CD8-positive, alpha-beta memory T cell (primary cell): ENCODE measurements at regions of chr1 and their contacts with region 1.

Region 1: GRCh38 chr1:211698161-211699026 is 23.0 kb upstream of the NEK2 start:
- DNase-seq: peak; percentile 72 to 84 (median 76)
- H3K4me3 ChIP-seq: peak overlapping the region; percentile 51
- H3K4me3 Mint-ChIP-seq: peak overlapping the region in 6 of 7 donors; percentile 65 to 84 (median 76)
- H3K27ac ChIP-seq: no peak overlapping the region
- H3K27ac Mint-ChIP-seq: peak overlapping the region in 3 of 8 donors; percentile 61 to 90 (median 78)
- H3K4me1 ChIP-seq: peaks cover 16% of the 10 kb centered on the region
- H3K4me1 Mint-ChIP-seq: peaks cover 35 to 53% (median 42%) of the 10 kb centered on the region in 3 donors
- H3K27me3 ChIP-seq: no peaks in the 10 kb centered on the region
- H3K27me3 Mint-ChIP-seq: no peaks in the 10 kb centered on the region

Region 2: GRCh38 chr1:211675230-211676105 is 22.9 kb before region 1 on chr1 and contains the start of gene NEK2:
- CTCF ChIA-PET with region 1: interaction called, 73 read pairs
- POLR2A ChIA-PET with region 1: no interaction called
- DNase-seq: peak; percentile 70 to 89 (median 80)
- H3K4me3 ChIP-seq: peak within 1 kb of the TSS; percentile 74
- H3K4me3 Mint-ChIP-seq: peak within 1 kb of the TSS; percentile 86 to 98 (median 92)
- H3K27ac ChIP-seq: peak within 1 kb of the TSS; percentile 65
- H3K27ac Mint-ChIP-seq: peak within 1 kb of the TSS; percentile 61 to 88 (median 81)
- H3K4me1 ChIP-seq: peaks cover 4% of the 10 kb centered on the region
- H3K4me1 Mint-ChIP-seq: peaks cover 16 to 23% (median 19%) of the 10 kb centered on the region in 3 donors
- H3K27me3 ChIP-seq: no peaks in the 10 kb centered on the region
- H3K27me3 Mint-ChIP-seq: no peaks in the 10 kb centered on the region
- total RNA-seq, gene NEK2: 14.1 to 14.8 TPM

Region 3: GRCh38 chr1:211680752-211681327 is 17.6 kb before region 1 on chr1:
- CTCF ChIA-PET with region 1: interaction called, 73 read pairs
- POLR2A ChIA-PET with region 1: no interaction called
- DNase-seq: peak; percentile 64 to 86 (median 77)
- H3K4me3 ChIP-seq: no peak overlapping the region
- H3K4me3 Mint-ChIP-seq: peak overlapping the region in 6 of 7 donors; percentile 15 to 50 (median 37)
- H3K27ac ChIP-seq: no peak overlapping the region
- H3K27ac Mint-ChIP-seq: peak overlapping the region; percentile 90 to 98 (median 94)
- H3K4me1 ChIP-seq: peaks cover 14% of the 10 kb centered on the region
- H3K4me1 Mint-ChIP-seq: peaks cover 24 to 30% (median 25%) of the 10 kb centered on the region in 3 donors
- H3K27me3 ChIP-seq: no peaks in the 10 kb centered on the region
- H3K27me3 Mint-ChIP-seq: no peaks in the 10 kb centered on the region

Region 4: DNA sequence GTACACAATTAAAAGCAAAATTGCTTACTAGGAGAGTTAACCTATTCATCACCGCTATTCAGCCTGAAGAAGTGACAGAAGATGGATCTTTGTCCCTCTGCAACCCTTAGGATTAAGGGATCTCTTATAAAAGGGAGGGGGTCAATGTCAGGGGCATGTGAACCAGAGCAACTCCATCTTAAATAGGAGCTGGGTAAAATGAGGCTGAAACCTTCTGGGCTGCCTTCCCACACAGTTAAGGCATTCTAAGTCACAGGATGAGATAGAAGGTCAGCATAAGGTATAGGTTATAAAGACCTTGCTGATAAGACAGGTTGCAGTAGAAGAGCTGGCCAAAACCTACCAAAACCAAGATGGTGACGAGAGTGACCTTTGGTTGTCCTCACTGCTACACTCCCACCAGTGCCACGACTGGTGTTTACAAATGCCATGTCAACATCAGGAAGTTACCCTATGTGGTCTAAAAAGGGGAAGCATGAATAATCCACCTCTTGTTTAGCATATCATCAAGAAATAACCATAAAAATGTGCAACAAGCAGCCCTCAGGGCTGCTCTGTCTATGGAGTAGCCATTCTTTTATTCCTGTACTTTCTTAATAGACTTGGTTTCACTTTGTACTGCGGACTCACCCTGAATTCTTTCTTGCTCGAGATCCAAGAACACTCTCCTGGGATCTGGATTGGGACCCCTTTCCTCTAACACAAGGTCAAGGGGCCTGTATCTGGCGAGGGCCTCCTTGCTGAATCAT is 12.3 kb after region 1 on chr1:
- CTCF ChIA-PET with region 1: interaction called, 13 read pairs
- POLR2A ChIA-PET with region 1: no interaction called
- DNase-seq: no peak
- H3K4me3 ChIP-seq: no peak overlapping the region
- H3K4me3 Mint-ChIP-seq: no peak overlapping the region
- H3K27ac ChIP-seq: no peak overlapping the region
- H3K27ac Mint-ChIP-seq: no peak overlapping the region
- H3K4me1 ChIP-seq: no peaks in the 10 kb centered on the region
- H3K4me1 Mint-ChIP-seq: no peaks in the 10 kb centered on the region
- H3K27me3 ChIP-seq: no peaks in the 10 kb centered on the region
- H3K27me3 Mint-ChIP-seq: no peaks in the 10 kb centered on the region